PC-9 (cell line): ENCODE measurements at regions of chr2 and their contacts with region 1.

Region 1: GRCh38 chr2:54942373-54942772 is 107.9 kb downstream of the RTN4 start:
- DNase-seq: no peak
- H3K4me3 ChIP-seq: no peak overlapping the region
- H3K27ac ChIP-seq: no peak overlapping the region
- H3K4me1 ChIP-seq: peaks cover 18% of the 10 kb centered on the region
- H3K27me3 ChIP-seq: no peaks in the 10 kb centered on the region
- CTCF ChIP-seq: no peak

Region 2: GRCh38 chr2:54879598-54880332 is 62.6 kb before region 1 on chr2:
- CTCF ChIA-PET with region 1: no interaction called
- POLR2A ChIA-PET with region 1: no interaction called
- intact Hi-C with region 1: no loop called
- DNase-seq: no peak
- H3K4me3 ChIP-seq: no peak overlapping the region
- H3K27ac ChIP-seq: no peak overlapping the region
- H3K4me1 ChIP-seq: no peaks in the 10 kb centered on the region
- H3K27me3 ChIP-seq: no peaks in the 10 kb centered on the region
- CTCF ChIP-seq: no peak

Region 3: GRCh38 chr2:54894467-54894866 is 47.9 kb before region 1 on chr2:
- CTCF ChIA-PET with region 1: no interaction called
- POLR2A ChIA-PET with region 1: no interaction called
- intact Hi-C with region 1: no loop called
- DNase-seq: no peak
- H3K4me3 ChIP-seq: no peak overlapping the region
- H3K27ac ChIP-seq: no peak overlapping the region
- H3K4me1 ChIP-seq: no peaks in the 10 kb centered on the region
- H3K27me3 ChIP-seq: no peaks in the 10 kb centered on the region
- CTCF ChIP-seq: no peak

Region 4: DNA sequence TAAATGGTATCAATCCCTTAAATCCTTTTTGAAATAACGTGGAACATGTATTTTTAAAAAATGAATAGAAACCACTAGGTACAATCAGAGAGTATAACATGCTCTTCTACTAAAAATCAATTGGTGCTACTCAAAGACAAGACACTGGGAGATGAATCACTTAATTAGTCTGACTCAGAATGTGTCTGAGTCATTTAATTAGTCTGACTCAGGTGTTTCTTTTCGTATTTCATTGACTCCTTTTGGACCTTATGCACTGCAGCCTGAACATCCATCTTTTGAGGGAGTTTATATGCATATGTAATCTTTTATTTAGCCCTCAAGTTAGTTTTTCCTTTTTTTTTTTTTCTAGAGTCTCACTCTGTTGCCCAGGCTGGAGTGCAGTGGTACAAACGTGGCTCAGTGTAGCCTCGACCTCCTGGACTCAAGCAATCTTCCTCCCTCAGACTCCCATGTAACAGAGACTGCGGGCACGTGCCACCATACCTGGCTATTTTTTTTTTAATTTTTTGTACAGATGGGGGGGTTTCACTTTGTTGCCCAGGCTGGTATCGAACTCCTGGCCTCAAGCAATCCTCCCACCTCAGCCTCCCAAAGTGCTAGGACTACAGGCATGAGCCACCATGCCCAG is 648.6 kb after region 1 on chr2:
- CTCF ChIA-PET with region 1: interaction called, 14 read pairs
- POLR2A ChIA-PET with region 1: no interaction called
- intact Hi-C with region 1: no loop called
- DNase-seq: peak in 1 of 2 experiments; percentile 48
- H3K4me3 ChIP-seq: no peak overlapping the region
- H3K27ac ChIP-seq: no peak overlapping the region
- H3K4me1 ChIP-seq: peaks cover 28% of the 10 kb centered on the region
- H3K27me3 ChIP-seq: no peaks in the 10 kb centered on the region
- CTCF ChIP-seq: no peak